CD14-positive monocyte (primary cell): ENCODE measurements at regions of chr3 and their contacts with region 1.

Region 1: GRCh38 chr3:196684548-196685407 is 27.3 kb downstream of the CEP19 start:
- DNase-seq: peak; percentile 62 to 76 (median 76)
- H3K4me3 ChIP-seq: peak overlapping the region in 1 of 3 experiments; percentile 55
- H3K4me3 Mint-ChIP-seq: peak overlapping the region; percentile 24 to 88
- H3K27ac ChIP-seq: peak overlapping the region; percentile 61 to 89
- H3K27ac Mint-ChIP-seq: peak overlapping the region; percentile 81 to 100 (median 90)
- H3K4me1 ChIP-seq: peaks cover 54 to 58% of the 10 kb centered on the region in 2 donors
- H3K4me1 Mint-ChIP-seq: peaks cover 52% of the 10 kb centered on the region
- H3K27me3 ChIP-seq: no peaks in the 10 kb centered on the region
- H3K27me3 Mint-ChIP-seq: no peaks in the 10 kb centered on the region
- CTCF ChIP-seq: peak; percentile 86

Region 2: GRCh38 chr3:196609343-196609775 is 75.4 kb before region 1 on chr3:
- intact Hi-C with region 1: loop called (anchors 5 kb)
- DNase-seq: peak; percentile 86 to 91 (median 90)
- H3K4me3 ChIP-seq: peak overlapping the region in 1 of 3 experiments; percentile 61
- H3K4me3 Mint-ChIP-seq: peak overlapping the region; percentile 43 to 80
- H3K27ac ChIP-seq: peak overlapping the region in 1 of 2 donors; percentile 68
- H3K27ac Mint-ChIP-seq: peak overlapping the region; percentile 83 to 94 (median 93)
- H3K4me1 ChIP-seq: peaks cover 26 to 29% of the 10 kb centered on the region in 2 donors
- H3K4me1 Mint-ChIP-seq: peaks cover 35% of the 10 kb centered on the region
- H3K27me3 ChIP-seq: no peaks in the 10 kb centered on the region
- H3K27me3 Mint-ChIP-seq: peaks cover 2% of the 10 kb centered on the region in 3 donors
- CTCF ChIP-seq: peak; percentile 92

Region 3: GRCh38 chr3:196620161-196620604 is 64.6 kb before region 1 on chr3:
- intact Hi-C with region 1: loop called in 1 of 2 experiments (anchors 5 kb)
- DNase-seq: peak; percentile 91 to 97 (median 95)
- H3K4me3 ChIP-seq: peak overlapping the region in 1 of 3 experiments; percentile 27
- H3K4me3 Mint-ChIP-seq: peak overlapping the region; percentile 59 to 71
- H3K27ac ChIP-seq: peak overlapping the region; percentile 81 to 93
- H3K27ac Mint-ChIP-seq: peak overlapping the region; percentile 95 to 100 (median 99)
- H3K4me1 ChIP-seq: peaks cover 86 to 91% of the 10 kb centered on the region in 2 donors
- H3K4me1 Mint-ChIP-seq: peaks cover 79% of the 10 kb centered on the region
- H3K27me3 ChIP-seq: no peaks in the 10 kb centered on the region
- H3K27me3 Mint-ChIP-seq: peaks cover 0 to 2% (median 0%) of the 10 kb centered on the region in 3 donors
- CTCF ChIP-seq: no peak